PC-9 (cell line): ENCODE measurements at regions of chr3 and their contacts with region 1.

Region 1: DNA sequence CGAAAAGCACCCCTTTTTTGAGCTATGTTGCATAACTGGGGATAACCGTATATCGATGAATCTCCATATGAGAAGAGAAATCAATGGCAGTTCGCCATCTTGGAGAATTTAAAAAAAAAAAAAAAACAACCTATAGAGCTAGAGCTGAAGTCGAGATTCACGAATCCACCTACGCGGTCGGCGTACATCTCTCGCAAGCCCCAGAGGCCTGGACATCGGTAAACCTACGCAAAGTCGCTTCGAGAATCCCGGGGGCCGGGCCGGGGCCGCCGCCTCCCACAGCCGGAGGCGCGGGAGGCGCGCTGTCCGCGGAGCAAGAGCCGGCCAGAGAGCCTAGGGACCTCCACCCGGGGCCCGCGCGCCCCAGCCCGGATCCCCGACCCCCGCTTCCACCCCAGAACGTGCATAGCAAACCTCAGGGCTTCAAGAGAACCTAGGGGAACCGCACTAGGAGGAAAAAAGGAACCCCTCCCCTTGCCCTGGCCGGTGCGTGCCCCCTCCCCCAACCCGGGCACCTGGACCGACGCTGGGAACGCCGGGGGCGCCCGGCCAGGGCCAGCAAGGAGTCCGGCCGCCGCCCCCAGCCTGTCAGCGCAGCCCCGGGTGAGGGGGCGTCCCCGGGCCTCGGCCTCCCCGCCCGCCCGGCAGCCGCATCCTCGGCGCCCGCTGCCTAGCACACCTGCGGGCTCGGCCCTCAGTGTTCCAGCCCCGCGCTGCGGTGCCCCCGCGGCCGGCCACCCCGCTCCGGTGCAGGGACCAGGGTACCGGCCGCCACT is 567 bp downstream of the PFN2 start:
- DNase-seq: peak; percentile 79 to 90
- H3K4me3 ChIP-seq: peak overlapping the region; percentile 78
- H3K27ac ChIP-seq: peak overlapping the region; percentile 88
- H3K4me1 ChIP-seq: peaks cover 35% of the 10 kb centered on the region
- H3K27me3 ChIP-seq: no peaks in the 10 kb centered on the region
- CTCF ChIP-seq: no peak

Region 2: GRCh38 chr3:150146991-150147761 is 177.0 kb after region 1 on chr3:
- CTCF ChIA-PET with region 1: no interaction called
- POLR2A ChIA-PET with region 1: interaction called, 10 read pairs
- intact Hi-C with region 1: no loop called
- DNase-seq: no peak
- H3K4me3 ChIP-seq: no peak overlapping the region
- H3K27ac ChIP-seq: no peak overlapping the region
- H3K4me1 ChIP-seq: peaks cover 38% of the 10 kb centered on the region
- H3K27me3 ChIP-seq: no peaks in the 10 kb centered on the region
- CTCF ChIP-seq: no peak

Region 3: DNA sequence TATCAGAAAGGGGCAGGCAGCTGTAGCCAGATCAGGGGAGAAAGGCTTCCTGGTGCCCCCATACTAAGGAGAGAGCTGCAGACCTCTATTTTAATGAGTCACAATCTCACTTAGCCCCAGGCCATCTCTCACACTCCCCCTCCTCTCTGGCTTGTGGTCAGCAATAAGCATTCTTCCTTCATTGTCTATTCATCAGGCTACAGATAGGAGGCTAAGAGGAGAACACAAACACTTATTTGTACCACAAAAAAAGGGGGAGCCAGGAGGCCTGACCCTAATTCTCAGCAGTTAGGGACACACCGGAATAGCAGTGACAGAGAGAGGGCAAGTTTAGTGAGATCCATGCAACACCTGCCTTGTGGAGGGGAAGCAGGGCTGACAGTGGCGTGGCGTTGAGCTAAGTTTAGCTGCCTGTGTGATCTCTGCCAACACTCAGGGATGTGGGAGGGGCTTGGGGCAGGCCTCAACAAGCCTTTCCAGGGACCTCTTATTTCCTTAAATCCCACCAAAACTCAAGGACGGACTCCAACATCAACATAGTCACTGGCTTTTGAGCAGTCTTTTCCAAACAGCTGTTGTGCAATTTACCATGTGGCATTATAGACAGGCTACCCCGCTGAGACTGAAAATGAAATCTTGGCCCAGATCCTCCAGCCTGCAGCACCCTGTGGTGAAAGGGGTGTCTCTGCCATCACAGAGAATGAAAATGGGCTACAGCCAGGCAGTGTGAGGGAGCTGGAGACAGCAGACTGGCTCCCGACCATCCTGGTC is 246.1 kb after region 1 on chr3:
- CTCF ChIA-PET with region 1: interaction called, 9 read pairs
- POLR2A ChIA-PET with region 1: interaction called, 4 read pairs
- intact Hi-C with region 1: loop called (anchors 1 kb)
- DNase-seq: peak; percentile 48 to 63
- H3K4me3 ChIP-seq: no peak overlapping the region
- H3K27ac ChIP-seq: no peak overlapping the region
- H3K4me1 ChIP-seq: peaks cover 10% of the 10 kb centered on the region
- H3K27me3 ChIP-seq: no peaks in the 10 kb centered on the region
- CTCF ChIP-seq: no peak; the same call in 1 of the 2 replicates

Region 4: GRCh38 chr3:150455341-150455740 is 485.2 kb after region 1 on chr3:
- CTCF ChIA-PET with region 1: no interaction called
- POLR2A ChIA-PET with region 1: interaction called, 20 read pairs
- intact Hi-C with region 1: no loop called
- DNase-seq: no peak
- H3K4me3 ChIP-seq: no peak overlapping the region
- H3K27ac ChIP-seq: no peak overlapping the region
- H3K4me1 ChIP-seq: peaks cover 8% of the 10 kb centered on the region; the same call in 1 of the 2 replicates
- H3K27me3 ChIP-seq: no peaks in the 10 kb centered on the region
- CTCF ChIP-seq: no peak

Region 5: GRCh38 chr3:150546226-150547044 is 576.3 kb after region 1 on chr3 and contains the starts of genes EIF2A and SERP1:
- CTCF ChIA-PET with region 1: no interaction called
- POLR2A ChIA-PET with region 1: no interaction called
- intact Hi-C with region 1: loop called (anchors 1 kb)
- DNase-seq: peak; percentile 96 to 99
- H3K4me3 ChIP-seq: peak within 1 kb of the TSS; percentile 82
- H3K27ac ChIP-seq: peak within 1 kb of the TSS; percentile 93
- H3K4me1 ChIP-seq: peaks cover 27% of the 10 kb centered on the region
- H3K27me3 ChIP-seq: no peaks in the 10 kb centered on the region
- CTCF ChIP-seq: no peak
- total RNA-seq, gene EIF2A: 96.4 and 102 TPM in 2 replicates
- total RNA-seq, gene SERP1: 106 and 113 TPM in 2 replicates